Activated CD4-positive, alpha-beta T cell treated with anti-CD3 and anti-CD28 coated beads, Interleukin-2, amount 10 ng/mL, durations not matched to agents 7 days and 5 days (primary cell): ENCODE measurements at regions of chr16 and their contacts with region 1.

Region 1: DNA sequence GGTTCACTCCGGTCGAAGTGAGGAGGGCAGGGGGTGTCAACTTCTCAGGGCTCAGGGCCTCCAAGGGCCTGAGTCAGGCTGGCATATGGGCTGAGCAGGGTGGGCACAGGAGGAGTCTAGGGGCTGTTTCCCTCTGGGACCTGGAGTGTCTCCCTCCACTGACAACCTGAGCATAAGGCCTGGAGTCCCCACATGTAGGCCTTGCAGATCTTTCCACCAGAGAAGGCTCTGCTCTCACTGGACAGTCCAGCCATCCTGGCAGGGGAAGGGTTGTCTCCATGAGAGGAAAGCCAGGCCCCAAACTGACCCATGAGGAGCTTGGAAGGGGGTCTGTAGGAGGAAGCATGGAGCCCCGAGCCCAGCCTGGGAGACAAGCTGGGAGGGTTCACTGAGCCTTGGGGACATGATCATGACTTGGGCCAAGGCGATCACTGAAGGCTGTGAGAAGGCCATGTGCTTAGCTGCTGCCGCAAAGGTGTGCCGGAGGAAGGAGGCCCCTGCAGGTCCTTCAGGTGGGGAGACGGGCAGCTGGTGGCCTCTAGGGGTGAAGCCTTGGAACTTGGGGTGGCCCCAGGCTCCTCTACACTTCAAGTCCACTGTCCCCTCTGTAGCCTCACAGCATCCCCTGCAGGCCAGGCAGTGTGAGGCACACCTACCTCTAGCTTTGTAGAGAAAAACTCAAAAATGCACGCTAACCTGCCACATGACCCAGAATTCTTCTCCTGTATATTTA is 9.9 kb downstream of the CMTM2 start:
- DNase-seq: peak; percentile 72
- H3K4me3 Mint-ChIP-seq: peak overlapping the region; percentile 49
- H3K27ac Mint-ChIP-seq: peak overlapping the region; percentile 71
- H3K4me1 Mint-ChIP-seq: peaks cover 53% of the 10 kb centered on the region
- H3K27me3 Mint-ChIP-seq: no peaks in the 10 kb centered on the region

Region 2: DNA sequence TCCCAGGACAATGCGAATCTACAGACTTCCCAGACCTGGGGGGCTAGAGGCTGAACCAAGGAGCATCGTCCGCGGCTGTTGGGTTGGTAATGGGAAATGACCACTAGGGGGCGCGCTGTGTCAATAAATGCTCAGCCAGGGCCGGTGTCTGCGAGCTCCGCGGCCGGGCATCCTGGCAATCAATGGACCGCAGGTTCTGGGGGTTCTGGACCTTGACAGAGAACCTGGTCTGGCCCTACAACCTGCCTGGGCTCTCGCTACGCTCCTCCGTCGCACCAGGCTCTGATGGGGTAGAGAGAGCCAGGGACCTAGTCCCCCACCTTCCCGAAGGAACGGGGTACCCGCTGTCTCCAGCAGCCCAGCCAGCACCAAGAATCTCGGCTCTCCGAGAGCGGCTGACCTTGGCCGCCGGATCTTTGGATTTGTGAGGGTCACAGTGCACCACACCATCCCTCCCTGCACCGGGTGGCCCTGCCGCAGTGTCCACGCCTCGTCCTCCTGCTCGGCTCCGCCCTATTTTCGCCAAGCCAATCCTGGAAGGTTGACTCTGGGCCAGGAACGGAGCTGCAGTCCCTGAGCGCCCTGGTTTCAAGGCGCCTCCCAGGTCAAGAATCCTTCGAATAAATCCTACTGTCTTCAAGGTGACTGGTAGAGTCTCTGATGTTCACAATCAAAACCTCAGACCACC is 182.5 kb before region 1 on chr16:
- CTCF ChIA-PET with region 1: interaction called, 24 read pairs
- POLR2A ChIA-PET with region 1: no interaction called
- DNase-seq: peak; percentile 90
- H3K4me3 Mint-ChIP-seq: peak overlapping the region; percentile 72
- H3K27ac Mint-ChIP-seq: peak overlapping the region; percentile 21
- H3K4me1 Mint-ChIP-seq: peaks cover 29% of the 10 kb centered on the region
- H3K27me3 Mint-ChIP-seq: peaks cover 14% of the 10 kb centered on the region

Region 3: DNA sequence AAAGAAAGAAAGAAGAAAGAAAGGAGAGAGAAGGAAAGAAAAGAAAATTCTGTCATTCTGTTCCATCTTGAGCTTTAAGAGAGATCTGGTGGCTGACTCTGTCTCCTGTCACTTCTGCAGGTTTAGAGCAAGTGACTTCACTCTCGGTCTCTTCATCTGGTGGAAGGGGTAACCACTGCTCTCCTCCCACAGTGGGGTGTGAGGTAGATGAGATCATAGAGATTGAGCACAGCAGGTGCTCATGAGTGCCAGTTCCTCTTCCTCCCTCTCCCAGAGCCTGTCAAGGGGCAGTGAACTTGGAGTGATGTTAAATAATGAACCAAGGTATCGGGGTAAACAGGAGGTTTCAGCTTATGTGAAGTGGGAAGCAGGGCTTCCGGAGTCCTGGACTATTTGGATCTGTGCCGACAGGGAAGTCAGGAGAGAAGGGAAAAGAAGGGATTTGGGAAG is 114.4 kb before region 1 on chr16:
- CTCF ChIA-PET with region 1: interaction called, 11 read pairs
- POLR2A ChIA-PET with region 1: no interaction called
- DNase-seq: peak; percentile 83
- H3K4me3 Mint-ChIP-seq: no peak overlapping the region
- H3K27ac Mint-ChIP-seq: peak overlapping the region; percentile 39
- H3K4me1 Mint-ChIP-seq: peaks cover 51% of the 10 kb centered on the region
- H3K27me3 Mint-ChIP-seq: no peaks in the 10 kb centered on the region

Region 4: GRCh38 chr16:66483689-66484481 is 105.3 kb before region 1 on chr16:
- CTCF ChIA-PET with region 1: interaction called, 10 read pairs
- POLR2A ChIA-PET with region 1: no interaction called
- DNase-seq: peak; percentile 78
- H3K4me3 Mint-ChIP-seq: no peak overlapping the region
- H3K27ac Mint-ChIP-seq: no peak overlapping the region
- H3K4me1 Mint-ChIP-seq: peaks cover 31% of the 10 kb centered on the region
- H3K27me3 Mint-ChIP-seq: no peaks in the 10 kb centered on the region

Region 5: GRCh38 chr16:66521951-66522771 is 67.0 kb before region 1 on chr16:
- CTCF ChIA-PET with region 1: interaction called, 12 read pairs
- POLR2A ChIA-PET with region 1: interaction called, 3 read pairs
- DNase-seq: peak; percentile 88
- H3K4me3 Mint-ChIP-seq: peak overlapping the region; percentile 59
- H3K27ac Mint-ChIP-seq: peak overlapping the region; percentile 95
- H3K4me1 Mint-ChIP-seq: peaks cover 86% of the 10 kb centered on the region
- H3K27me3 Mint-ChIP-seq: no peaks in the 10 kb centered on the region

Region 6: GRCh38 chr16:66578651-66579531 is 10.3 kb before region 1 on chr16 and contains the start of gene CMTM2:
- CTCF ChIA-PET with region 1: interaction called, 14 read pairs
- POLR2A ChIA-PET with region 1: no interaction called
- DNase-seq: no peak
- H3K4me3 Mint-ChIP-seq: peak within 1 kb of the TSS; percentile 16
- H3K27ac Mint-ChIP-seq: no peak within 1 kb of the TSS
- H3K4me1 Mint-ChIP-seq: peaks cover 13% of the 10 kb centered on the region
- H3K27me3 Mint-ChIP-seq: peaks cover 40% of the 10 kb centered on the region
- total RNA-seq, gene CMTM2: 0.73 to 0.97 TPM

Region 7: DNA sequence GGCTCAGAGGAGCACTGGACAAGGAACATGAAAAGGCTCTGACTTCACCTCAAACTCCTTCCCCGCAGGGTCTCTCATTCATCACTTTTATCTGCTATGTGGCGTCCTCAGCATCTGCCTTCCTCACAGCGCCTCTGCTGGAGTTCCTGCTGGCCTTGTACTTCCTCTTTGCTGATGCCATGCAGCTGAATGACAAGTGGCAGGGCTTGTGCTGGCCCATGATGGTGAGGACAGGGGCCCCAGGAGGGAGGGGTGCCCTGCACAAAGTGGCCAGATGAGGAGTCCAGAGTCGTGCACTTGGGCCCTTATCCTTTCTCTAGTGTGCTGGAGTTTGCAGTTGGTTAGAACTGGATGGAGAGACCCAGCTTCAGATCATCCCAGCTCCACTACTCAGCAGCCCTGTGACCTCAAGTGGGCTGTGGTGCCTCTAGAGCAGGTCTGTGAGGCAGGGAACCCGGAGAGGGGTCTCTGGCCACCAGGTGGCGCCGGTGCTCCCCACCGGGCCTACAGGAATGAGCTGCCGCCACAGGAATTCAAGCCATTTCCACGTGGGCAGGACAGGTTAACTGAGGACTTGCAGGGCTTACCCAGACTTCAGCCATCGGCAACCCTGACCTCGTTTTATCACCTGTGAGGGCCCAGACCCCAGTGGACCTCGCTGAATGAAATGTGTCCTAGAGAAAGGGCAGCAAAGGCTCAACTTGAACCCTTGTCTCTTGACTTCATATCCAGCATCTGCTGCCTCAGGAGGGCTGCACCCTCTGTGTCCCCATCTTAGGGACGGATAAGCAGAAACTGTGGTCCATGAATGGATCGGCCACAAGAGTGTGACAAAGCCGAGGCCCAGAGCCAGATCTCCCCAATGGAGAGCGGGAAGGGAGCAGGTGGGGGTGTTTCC is 19.3 kb after region 1 on chr16:
- CTCF ChIA-PET with region 1: interaction called, 12 read pairs
- POLR2A ChIA-PET with region 1: interaction called, 3 read pairs
- DNase-seq: peak; percentile 85
- H3K4me3 Mint-ChIP-seq: no peak overlapping the region
- H3K27ac Mint-ChIP-seq: peak overlapping the region; percentile 66
- H3K4me1 Mint-ChIP-seq: peaks cover 35% of the 10 kb centered on the region
- H3K27me3 Mint-ChIP-seq: no peaks in the 10 kb centered on the region

Region 8: DNA sequence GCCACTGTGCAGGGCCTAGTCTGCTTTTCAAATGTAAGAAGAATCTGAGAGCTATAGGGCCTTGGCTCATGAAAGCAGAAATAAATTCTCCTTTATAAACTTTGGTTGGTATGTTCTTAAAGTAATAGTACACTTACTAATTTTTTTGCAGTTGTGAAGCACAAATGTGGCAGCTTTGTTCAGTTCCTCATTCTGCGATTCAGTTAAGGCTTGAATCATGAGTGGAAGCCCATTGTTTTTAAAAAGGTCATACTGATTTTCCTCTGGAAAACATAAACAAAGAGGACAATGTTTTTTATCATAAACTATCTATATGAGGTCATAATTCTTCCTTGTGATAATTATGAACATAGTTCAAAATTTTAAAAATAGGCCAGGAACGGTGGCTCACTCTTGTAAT is 185.8 kb after region 1 on chr16:
- CTCF ChIA-PET with region 1: no interaction called
- POLR2A ChIA-PET with region 1: no interaction called
- DNase-seq: no peak
- H3K4me3 Mint-ChIP-seq: no peak overlapping the region
- H3K27ac Mint-ChIP-seq: no peak overlapping the region
- H3K4me1 Mint-ChIP-seq: no peaks in the 10 kb centered on the region
- H3K27me3 Mint-ChIP-seq: no peaks in the 10 kb centered on the region